ENCODE measurements at regions of chr6 and their contacts with region 1.

Region 1: GRCh38 chr6:96897383-96898240 is at the start of gene NDUFAF4:
- DNase-seq: peak; percentile 95
- ATAC-seq: peak; percentile 93
- H3K4me3 Mint-ChIP-seq: peak within 1 kb of the TSS; percentile 97
- H3K27ac Mint-ChIP-seq: peak within 1 kb of the TSS; percentile 94
- H3K4me1 Mint-ChIP-seq: peaks cover 27% of the 10 kb centered on the region
- H3K27me3 Mint-ChIP-seq: peaks cover 4% of the 10 kb centered on the region
- CTCF ChIP-seq: no peak
- total RNA-seq, gene NDUFAF4: 39.9 and 40.7 TPM in 2 replicates

Region 2: GRCh38 chr6:95431637-95432228 is 1465.9 kb before region 1 on chr6:
- CTCF ChIA-PET with region 1: no interaction called
- POLR2A ChIA-PET with region 1: no interaction called
- intact Hi-C with region 1: loop called (anchors 2 kb)
- DNase-seq: no peak
- ATAC-seq: no peak
- H3K4me3 Mint-ChIP-seq: no peak overlapping the region
- H3K27ac Mint-ChIP-seq: no peak overlapping the region
- H3K4me1 Mint-ChIP-seq: no peaks in the 10 kb centered on the region
- H3K27me3 Mint-ChIP-seq: no peaks in the 10 kb centered on the region
- CTCF ChIP-seq: no peak

Region 3: DNA sequence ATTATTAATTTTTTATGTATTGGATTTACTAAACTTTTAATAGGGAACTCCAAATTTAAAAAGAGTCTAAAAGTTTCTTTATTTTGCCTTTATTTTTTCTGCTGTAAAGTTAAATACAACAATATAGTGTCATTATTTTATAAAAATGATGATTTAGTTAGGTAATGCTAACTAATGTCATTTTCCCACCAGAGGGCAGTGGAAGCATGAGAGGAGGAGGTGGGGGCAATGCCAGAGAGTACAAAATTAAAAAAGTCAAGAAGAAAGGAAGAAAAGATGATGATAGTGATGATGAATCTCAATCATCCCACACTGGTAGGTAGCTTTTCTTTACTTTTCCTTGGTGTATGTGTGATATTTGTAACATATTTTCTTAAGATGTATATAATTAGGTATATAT is 354.9 kb before region 1 on chr6:
- CTCF ChIA-PET with region 1: no interaction called
- POLR2A ChIA-PET with region 1: no interaction called
- intact Hi-C with region 1: loop called (anchors 2 kb)
- DNase-seq: no peak
- ATAC-seq: no peak
- H3K4me3 Mint-ChIP-seq: no peak overlapping the region
- H3K27ac Mint-ChIP-seq: no peak overlapping the region
- H3K4me1 Mint-ChIP-seq: no peaks in the 10 kb centered on the region
- H3K27me3 Mint-ChIP-seq: no peaks in the 10 kb centered on the region
- CTCF ChIP-seq: no peak

Region 4: DNA sequence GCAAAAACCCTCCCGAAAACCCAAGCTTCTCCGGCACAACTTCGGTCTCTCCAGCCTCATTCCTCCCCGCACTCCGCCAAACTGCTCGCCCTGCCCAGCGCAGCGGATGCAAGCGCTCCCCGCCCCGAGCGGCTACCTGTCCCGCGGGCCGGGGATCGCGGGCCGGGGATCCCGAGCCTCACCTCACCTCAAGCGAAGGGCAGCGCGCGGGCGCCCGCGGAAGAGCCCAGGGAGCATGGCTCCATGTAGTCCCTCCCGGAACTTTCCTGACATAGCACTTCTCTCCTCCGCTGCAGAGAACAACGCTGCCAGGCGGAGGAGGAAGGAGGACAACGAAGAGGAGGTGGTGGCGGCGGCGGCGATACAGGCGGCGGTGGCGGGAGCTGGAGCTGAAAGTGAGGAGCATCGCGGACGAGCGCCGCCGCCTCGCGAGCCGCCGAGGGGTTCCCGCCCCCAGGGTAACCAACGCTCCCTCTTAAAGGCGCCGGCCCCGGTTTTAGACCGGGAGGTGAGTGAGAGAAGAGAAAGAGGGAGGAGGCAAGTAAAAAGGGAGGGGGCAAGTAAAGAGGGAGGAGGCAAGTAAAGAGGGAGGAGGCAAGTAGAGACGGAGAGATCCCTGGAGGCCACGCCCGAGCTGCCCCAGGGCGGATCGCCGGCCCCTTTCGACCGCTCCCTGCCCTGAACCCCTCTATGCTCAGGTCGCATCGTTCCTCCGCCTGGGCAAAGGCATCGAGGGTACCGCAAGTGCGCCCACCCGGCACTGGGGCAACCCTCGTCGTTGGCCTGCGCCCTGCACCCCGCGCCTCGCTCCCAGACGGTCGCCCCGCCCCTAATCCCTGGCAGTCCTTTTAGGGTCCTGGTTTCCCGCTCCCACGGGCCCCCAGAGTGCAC is 60.3 kb before region 1 on chr6 and contains the start of gene GPR63:
- CTCF ChIA-PET with region 1: no interaction called
- POLR2A ChIA-PET with region 1: no interaction called
- intact Hi-C with region 1: loop called (anchors 5 kb)
- DNase-seq: peak; percentile 28
- ATAC-seq: peak; percentile 83
- H3K4me3 Mint-ChIP-seq: peak within 1 kb of the TSS; percentile 86
- H3K27ac Mint-ChIP-seq: no peak within 1 kb of the TSS
- H3K4me1 Mint-ChIP-seq: peaks cover 14% of the 10 kb centered on the region
- H3K27me3 Mint-ChIP-seq: peaks cover 41% of the 10 kb centered on the region
- CTCF ChIP-seq: no peak
- total RNA-seq, gene GPR63: 0.02 and 0.11 TPM in 2 replicates

Region 5: DNA sequence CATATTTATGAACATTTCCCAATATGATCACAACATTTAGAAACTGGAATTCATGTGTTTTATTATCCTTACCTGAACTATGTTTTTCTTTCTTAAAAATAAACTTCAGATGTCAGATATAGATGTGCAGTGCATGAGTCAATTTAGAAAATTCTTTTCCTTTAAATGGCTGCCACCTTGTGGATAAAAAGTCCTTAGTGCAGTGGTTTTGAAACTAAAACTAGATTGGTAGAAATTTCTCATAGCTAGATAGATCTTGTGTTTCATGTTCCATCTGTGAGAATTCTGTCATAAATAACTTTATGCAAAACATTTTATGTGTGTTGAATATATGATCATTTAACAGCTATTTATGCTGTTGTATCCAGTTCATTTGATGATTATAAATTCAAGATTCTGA is 161.9 kb after region 1 on chr6:
- CTCF ChIA-PET with region 1: interaction called, 5 read pairs
- POLR2A ChIA-PET with region 1: interaction called, 3 read pairs
- intact Hi-C with region 1: loop called (anchors 1 kb)
- DNase-seq: no peak
- ATAC-seq: no peak
- H3K4me3 Mint-ChIP-seq: no peak overlapping the region
- H3K27ac Mint-ChIP-seq: no peak overlapping the region
- H3K4me1 Mint-ChIP-seq: no peaks in the 10 kb centered on the region
- H3K27me3 Mint-ChIP-seq: peaks cover 3% of the 10 kb centered on the region
- CTCF ChIP-seq: no peak

Region 6: GRCh38 chr6:98834060-98835031 is 1936.7 kb after region 1 on chr6 and contains the start of gene POU3F2:
- CTCF ChIA-PET with region 1: no interaction called
- POLR2A ChIA-PET with region 1: no interaction called
- intact Hi-C with region 1: loop called (anchors 5 kb)
- DNase-seq: peak; percentile 48
- ATAC-seq: peak; percentile 88
- H3K4me3 Mint-ChIP-seq: peak within 1 kb of the TSS; percentile 89
- H3K27ac Mint-ChIP-seq: no peak within 1 kb of the TSS
- H3K4me1 Mint-ChIP-seq: peaks cover 47% of the 10 kb centered on the region
- H3K27me3 Mint-ChIP-seq: peaks cover 60% of the 10 kb centered on the region
- CTCF ChIP-seq: no peak
- total RNA-seq, gene POU3F2: not detected in 2 replicates